ENCODE measurements at regions of chr5 and their contacts with region 1.

Region 1: GRCh38 chr5:171418316-171418981 is 998 bp upstream of the FGF18 start:
- DNase-seq: peak; percentile 86 to 94 (median 92)
- ATAC-seq: peak; percentile 85
- H3K4me3 ChIP-seq: peak overlapping the region; percentile 69
- H3K27ac ChIP-seq: no peak overlapping the region
- H3K4me1 ChIP-seq: no peaks in the 10 kb centered on the region
- H3K27me3 ChIP-seq: no peaks in the 10 kb centered on the region

Region 2: GRCh38 chr5:171092194-171092593 is 326.3 kb before region 1 on chr5:
- intact Hi-C with region 1: no loop called
- DNase-seq: no peak
- ATAC-seq: no peak
- H3K4me3 ChIP-seq: no peak overlapping the region
- H3K27ac ChIP-seq: no peak overlapping the region
- H3K4me1 ChIP-seq: no peaks in the 10 kb centered on the region
- H3K27me3 ChIP-seq: no peaks in the 10 kb centered on the region

Region 3: DNA sequence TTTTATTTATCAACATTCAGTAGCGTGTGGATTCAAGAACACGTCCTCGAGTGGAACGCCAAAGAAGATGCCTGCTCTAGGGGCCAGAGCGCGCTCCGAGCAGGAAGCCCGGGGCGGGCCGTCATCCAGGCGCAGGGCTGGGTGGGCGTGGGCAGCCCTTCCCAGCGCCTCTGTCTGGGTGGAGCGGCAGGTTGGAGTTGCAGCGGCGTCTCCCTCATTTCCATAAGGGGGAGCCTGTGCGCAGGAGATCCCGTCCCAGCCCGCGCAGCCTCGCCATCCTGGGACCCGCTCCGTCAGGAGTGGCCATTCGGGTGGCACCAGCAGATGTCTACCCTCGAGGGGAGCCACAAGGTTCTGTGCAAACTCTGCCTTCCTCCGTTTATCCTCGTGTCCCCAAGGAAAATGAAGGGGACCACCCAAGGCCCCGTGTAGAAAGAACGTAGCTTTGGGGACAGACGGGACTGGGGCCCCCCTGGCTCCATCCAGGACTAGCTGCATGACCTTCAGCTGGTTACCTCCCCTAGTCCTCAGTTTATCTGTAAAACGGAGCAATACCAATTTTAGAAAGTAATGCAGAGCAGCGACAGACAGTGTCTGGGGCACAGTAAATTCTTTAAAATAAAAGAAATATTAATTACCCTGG is 211.7 kb after region 1 on chr5:
- intact Hi-C with region 1: loop called in 3 of 4 experiments (anchors 10 kb)
- DNase-seq: peak; percentile 73 to 82 (median 82)
- ATAC-seq: peak; percentile 89 to 95
- H3K4me3 ChIP-seq: no peak overlapping the region
- H3K27ac ChIP-seq: no peak overlapping the region
- H3K4me1 ChIP-seq: no peaks in the 10 kb centered on the region
- H3K27me3 ChIP-seq: no peaks in the 10 kb centered on the region

Region 4: DNA sequence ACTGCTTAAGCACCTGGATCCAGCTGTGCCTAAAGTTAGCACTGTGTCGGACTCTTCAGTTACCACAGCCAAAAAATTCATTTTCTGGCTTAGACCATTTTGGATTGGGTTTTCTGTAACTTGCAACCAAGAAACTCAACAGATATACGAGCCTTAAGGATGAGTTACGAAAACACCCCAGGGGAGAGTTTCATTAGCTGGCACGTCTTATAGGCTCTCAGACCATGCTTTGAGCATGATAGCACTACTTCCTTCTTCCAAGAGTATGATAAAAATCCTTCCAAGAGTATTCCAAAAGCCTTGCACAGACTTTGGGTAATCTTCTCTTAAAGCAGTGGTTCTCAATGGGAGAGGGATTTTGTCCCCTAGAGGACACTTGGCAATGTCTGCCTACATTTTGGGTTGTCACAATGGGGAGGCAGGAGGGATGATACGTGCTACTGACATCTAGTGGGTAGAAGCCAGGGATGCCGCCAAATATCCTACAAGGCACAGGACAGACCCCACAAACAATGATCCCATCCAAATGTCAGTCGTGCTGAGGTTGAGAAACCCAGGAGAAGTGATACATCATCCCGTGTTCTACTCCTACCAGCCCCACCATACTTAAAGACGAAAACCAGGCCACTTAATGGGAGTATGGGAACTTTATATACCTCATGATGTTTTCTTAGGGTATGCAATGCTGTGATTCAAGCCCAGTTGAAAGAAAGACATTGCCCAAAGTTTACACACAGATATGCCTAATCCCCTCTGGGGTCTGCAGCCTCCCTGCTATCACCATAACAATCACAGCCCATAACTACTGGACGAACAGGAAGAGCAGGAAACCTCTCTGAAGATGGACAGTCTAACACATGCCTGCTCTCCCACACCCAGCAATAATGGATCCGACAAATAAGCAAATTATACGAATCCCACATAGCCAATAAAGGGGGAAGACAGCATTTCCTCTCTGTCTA is 432.2 kb after region 1 on chr5:
- intact Hi-C with region 1: loop called in 3 of 4 experiments (anchors 5 to 10 kb)
- DNase-seq: no peak
- ATAC-seq: peak; percentile 38 to 39
- H3K4me3 ChIP-seq: no peak overlapping the region
- H3K27ac ChIP-seq: no peak overlapping the region
- H3K4me1 ChIP-seq: no peaks in the 10 kb centered on the region
- H3K27me3 ChIP-seq: no peaks in the 10 kb centered on the region

Region 5: DNA sequence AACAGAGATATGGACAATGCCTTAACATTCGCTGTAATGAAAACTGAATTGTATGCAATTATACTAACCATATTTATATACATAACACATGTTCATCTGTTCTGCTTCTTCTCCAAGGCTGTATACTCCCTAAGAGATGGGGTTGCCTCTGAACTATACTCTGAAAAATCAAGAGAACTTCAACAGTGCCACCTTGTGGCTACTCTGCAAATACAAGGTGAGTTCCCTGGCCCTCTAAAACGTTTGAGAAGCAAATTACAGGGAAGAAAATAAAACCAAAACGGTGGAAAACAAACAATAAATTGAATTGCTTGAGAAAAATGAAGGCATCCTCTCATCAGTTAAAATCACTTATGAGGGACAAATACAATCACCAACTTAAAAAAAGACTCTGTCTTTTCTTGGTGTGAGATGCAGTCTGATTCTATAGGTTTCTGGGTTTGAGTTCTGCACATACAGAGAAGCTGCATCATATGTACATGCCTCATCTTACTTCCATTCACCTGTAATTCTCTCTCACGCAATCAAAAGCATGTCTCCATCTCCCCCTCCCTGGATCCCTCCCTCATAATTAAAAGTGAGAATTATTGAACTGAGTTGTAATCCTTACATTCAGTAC is 489.4 kb after region 1 on chr5:
- intact Hi-C with region 1: loop called (anchors 5 kb)
- DNase-seq: no peak
- ATAC-seq: peak; percentile 79 to 85
- H3K4me3 ChIP-seq: no peak overlapping the region
- H3K27ac ChIP-seq: no peak overlapping the region
- H3K4me1 ChIP-seq: peaks cover 2% of the 10 kb centered on the region
- H3K27me3 ChIP-seq: no peaks in the 10 kb centered on the region

Region 6: DNA sequence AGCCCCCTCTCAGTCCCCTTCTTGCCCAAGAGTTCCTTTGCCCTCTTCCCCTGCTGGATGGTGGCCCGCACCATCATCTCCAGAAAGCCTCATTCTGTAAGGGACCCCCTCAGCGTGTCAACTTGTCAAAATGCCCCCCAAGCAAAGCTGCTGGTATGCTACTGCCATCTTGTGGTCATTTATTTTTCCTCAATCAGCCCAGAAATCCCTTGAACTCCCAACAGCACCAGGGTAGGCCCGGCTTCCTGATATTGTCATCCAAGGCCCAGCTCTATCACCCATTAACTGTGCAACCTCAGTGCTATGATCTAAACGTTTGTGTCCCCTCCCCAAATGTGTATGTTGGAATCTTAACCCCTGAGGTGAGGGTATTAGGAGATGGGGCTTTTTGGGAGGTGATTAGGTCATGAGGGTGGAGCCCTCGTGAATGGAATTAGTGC is 641.2 kb after region 1 on chr5:
- intact Hi-C with region 1: loop called in 1 of 4 experiments (anchors 10 kb)
- DNase-seq: no peak
- ATAC-seq: peak in 1 of 2 donors; percentile 18
- H3K4me3 ChIP-seq: no peak overlapping the region
- H3K27ac ChIP-seq: no peak overlapping the region
- H3K4me1 ChIP-seq: no peaks in the 10 kb centered on the region
- H3K27me3 ChIP-seq: no peaks in the 10 kb centered on the region